ENCODE measurements at regions of chr2 and their contacts with region 1.

Region 1: DNA sequence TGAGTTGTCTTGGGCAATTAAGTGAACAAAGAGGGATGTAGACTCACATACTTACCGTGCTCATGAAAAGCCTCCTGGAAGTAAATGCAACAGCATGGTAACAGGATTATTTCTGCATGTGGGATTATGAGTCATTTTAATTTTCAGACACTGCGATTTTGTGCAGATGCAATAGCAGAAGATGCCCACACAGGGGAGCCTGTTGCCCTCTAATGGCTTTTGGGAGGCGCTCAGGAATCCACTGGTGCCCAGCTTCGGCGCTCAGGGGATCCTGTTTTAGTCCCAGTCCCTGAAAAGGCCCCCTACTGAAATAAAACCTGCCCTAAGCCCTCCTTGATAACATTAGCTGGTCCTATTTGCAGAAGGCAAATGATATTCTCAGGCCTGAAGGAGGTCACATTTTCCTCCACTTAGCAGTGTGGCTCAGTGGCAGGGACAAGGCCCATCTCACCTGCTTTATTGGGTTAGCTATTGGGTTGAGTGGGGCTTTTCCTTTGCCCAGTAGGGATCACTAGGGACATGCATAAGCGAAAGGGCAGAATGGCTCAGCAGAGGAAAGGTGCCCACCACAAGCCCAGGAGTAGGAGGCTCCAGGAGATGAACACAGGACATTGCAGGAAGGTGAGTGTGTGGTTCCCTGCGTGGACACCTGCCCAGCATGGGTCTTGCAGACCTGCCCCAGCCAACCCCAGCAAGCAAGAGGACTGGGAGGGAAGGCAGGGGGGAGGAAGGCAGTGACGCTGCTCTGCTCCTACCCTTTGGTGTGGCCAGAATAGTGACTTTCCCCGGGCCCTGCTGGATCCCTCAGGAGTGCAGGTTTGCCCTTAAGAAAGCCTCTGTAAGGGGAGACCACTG is 26.5 kb upstream of the KCNS3 start:
- DNase-seq: no peak

Region 2: GRCh38 chr2:17830053-17831034 is 21.6 kb before region 1 on chr2:
- intact Hi-C with region 1: no loop called
- DNase-seq: peak; percentile 85

Region 3: GRCh38 chr2:18047850-18048249 is 195.9 kb after region 1 on chr2:
- intact Hi-C with region 1: no loop called
- DNase-seq: no peak

Region 4: GRCh38 chr2:18149645-18150246 is 297.8 kb after region 1 on chr2:
- intact Hi-C with region 1: loop called in 1 of 2 experiments (anchors 10 kb)
- DNase-seq: no peak

Region 5: DNA sequence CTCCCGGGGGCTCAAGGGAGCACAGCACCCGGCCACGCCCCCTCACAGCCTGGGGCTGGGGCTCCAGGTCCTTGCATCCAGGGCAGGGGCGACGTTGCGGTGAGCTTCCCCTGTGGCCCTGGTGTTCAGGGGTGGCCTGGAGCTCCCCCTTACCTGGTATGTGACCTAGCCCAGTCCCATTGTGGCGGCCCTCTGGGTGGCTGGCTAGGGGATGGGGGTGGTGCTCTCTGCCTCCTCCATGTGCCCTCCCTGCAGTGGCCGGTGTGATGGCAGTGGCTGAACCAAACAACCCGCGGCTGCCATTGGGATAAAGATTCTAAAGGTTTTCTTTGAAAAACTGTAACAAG is 420.2 kb after region 1 on chr2:
- intact Hi-C with region 1: no loop called
- DNase-seq: peak; percentile 78